Sigmoid colon (tissue), 7 donors: ENCODE measurements at regions of chr1 and their contacts with region 1.

Region 1: GRCh38 chr1:222048094-222048595 is 306.3 kb upstream of the DUSP10 start:
- DNase-seq: no peak
- H3K4me3 ChIP-seq: no peak overlapping the region
- H3K27ac ChIP-seq: no peak overlapping the region
- H3K4me1 ChIP-seq: peaks cover 0 to 40% (median 27%) of the 10 kb centered on the region in 4 donors
- H3K27me3 ChIP-seq: no peaks in the 10 kb centered on the region
- CTCF ChIP-seq: no peak
- EP300 ChIP-seq: no peak
- POLR2A ChIP-seq: no peak

Region 2: GRCh38 chr1:221708987-221709386 is 339.2 kb before region 1 on chr1:
- intact Hi-C with region 1: loop called (anchors 10 kb)
- DNase-seq: peak; percentile 85
- H3K4me3 ChIP-seq: no peak overlapping the region
- H3K27ac ChIP-seq: peak overlapping the region; percentile 74 to 89 (median 81)
- H3K4me1 ChIP-seq: peaks cover 0 to 98% (median 85%) of the 10 kb centered on the region in 4 donors
- H3K27me3 ChIP-seq: no peaks in the 10 kb centered on the region
- CTCF ChIP-seq: no peak
- EP300 ChIP-seq: peak in 3 of 4 donors; percentile 53 to 93 (median 89)
- POLR2A ChIP-seq: no peak

Region 3: DNA sequence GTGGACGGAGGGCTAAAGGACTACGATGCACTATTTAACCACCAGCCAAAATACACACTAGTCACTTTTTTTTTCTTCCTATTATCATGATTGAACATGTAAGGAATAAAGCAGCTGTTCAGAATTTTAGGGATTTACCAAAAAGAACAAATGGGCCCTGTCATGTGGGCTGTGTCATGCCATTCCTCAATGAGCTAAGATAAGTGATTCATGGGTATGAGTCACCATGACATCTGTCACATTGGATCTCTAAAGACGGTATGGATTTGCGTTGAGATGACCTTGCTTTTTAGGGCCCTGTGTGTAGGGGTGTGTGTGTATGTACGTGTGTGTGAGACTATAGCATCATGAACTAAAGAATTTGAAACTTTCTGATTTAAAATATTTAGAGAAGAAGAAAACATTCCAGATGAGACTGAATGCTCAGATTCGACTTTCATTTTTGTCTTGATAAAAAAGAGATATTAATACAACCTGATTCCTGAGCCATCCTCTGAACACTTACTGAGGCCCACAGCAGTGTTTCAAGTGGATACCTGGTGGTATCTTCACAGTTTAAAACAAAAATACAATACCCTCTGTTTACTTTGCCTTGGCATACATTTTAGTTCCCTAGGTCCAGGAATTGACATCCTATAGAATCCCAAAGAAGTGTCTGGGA is 60.2 kb before region 1 on chr1:
- intact Hi-C with region 1: no loop called
- DNase-seq: no peak
- H3K4me3 ChIP-seq: no peak overlapping the region
- H3K27ac ChIP-seq: no peak overlapping the region
- H3K4me1 ChIP-seq: peaks cover 0 to 16% (median 5%) of the 10 kb centered on the region in 4 donors
- H3K27me3 ChIP-seq: no peaks in the 10 kb centered on the region
- CTCF ChIP-seq: no peak
- EP300 ChIP-seq: no peak
- POLR2A ChIP-seq: no peak

Region 4: DNA sequence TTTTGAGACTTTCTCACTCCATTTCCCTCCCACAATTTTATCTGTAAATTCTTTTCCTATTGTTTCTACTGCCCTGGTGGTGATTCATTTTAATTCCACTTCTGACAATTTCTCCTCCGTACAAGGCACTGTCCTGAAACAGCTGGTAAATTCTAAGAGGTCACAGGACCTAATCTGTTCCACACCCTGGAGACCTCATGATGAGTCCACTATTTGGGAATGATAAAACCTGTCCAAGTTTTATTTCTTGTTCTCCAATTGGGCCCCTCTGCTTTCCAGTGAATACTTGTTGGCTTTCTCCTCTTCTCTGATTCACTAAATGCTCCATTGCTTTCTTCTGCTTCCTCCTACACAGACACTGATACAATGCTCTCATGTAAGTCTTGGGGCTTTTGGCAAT is 36.9 kb after region 1 on chr1:
- intact Hi-C with region 1: loop called (anchors 5 kb)
- DNase-seq: no peak
- H3K4me3 ChIP-seq: no peak overlapping the region
- H3K27ac ChIP-seq: no peak overlapping the region
- H3K4me1 ChIP-seq: peaks cover 0 to 6% (median 0%) of the 10 kb centered on the region in 4 donors
- H3K27me3 ChIP-seq: no peaks in the 10 kb centered on the region
- CTCF ChIP-seq: no peak
- EP300 ChIP-seq: no peak
- POLR2A ChIP-seq: no peak

Region 5: DNA sequence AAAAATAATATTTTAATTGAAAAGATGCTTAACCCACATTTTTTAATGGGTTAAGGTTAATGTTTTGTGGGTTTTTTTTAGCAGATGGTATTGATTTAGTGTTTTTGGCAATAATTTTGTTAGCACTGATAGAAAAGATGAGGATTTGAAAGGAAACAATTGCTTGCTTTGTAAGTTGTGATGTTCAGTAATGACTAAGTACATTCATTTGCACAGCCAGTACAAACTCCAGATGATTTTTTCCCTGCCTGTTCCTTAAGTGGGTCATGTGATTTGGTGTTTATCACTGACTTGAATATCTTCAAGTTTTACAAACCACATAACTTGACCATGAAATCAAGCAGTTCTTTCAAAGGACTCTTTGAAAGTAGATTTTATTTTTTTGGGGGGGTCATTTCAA is 781.7 kb after region 1 on chr1:
- intact Hi-C with region 1: no loop called
- DNase-seq: no peak
- H3K4me3 ChIP-seq: no peak overlapping the region
- H3K27ac ChIP-seq: peak overlapping the region in 3 of 4 donors; percentile 51 to 70 (median 69)
- H3K4me1 ChIP-seq: peaks cover 0 to 63% (median 38%) of the 10 kb centered on the region in 4 donors
- H3K27me3 ChIP-seq: no peaks in the 10 kb centered on the region
- CTCF ChIP-seq: no peak
- EP300 ChIP-seq: peak in 1 of 4 donors; percentile 59
- POLR2A ChIP-seq: no peak